ENCODE measurements at regions of chr2 and their contacts with region 1.

Region 1: DNA sequence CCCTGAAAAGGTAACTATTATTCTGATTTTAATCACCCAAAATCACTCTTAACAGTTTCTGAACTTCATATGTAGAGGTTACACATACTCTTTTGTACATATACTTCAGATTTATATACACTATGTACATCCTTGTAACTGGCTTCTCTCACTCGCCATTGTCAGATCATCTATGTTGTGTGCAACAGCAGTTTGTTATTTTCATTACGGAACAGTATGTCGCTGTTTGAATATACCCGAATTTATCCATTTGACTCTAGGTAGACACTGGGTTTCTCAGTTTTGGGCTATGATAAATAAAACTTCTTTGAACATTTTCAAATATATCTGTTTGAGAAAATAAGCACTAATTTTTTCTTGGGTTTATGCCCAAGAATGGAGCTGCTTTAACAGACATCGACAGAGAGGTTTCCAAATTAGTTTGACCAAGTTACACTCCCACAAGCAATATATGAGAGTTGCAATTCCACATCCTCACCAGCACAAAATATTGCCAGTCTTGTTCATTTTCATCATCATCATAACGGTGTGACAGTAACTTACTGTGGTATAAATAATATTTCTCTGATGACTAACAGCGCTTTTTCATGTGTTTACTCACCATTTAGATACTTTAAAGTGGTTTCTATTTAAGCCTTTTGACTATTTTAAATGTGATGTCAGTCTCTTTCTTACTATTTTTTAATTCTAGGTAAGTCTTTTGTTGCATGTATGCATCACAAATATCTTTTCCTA is 80.9 kb downstream of the SMC6 start:
- DNase-seq: peak; percentile 7 to 20
- ATAC-seq: peak; percentile 84 to 88
- H3K4me3 ChIP-seq: no peak overlapping the region
- H3K27ac ChIP-seq: no peak overlapping the region
- H3K4me1 ChIP-seq: peaks cover 3% of the 10 kb centered on the region; the same call in 1 of the 3 replicates
- CTCF ChIP-seq: no peak
- EP300 ChIP-seq: no peak
- POLR2A ChIP-seq: no peak
- RAD21 ChIP-seq: no peak

Region 2: GRCh38 chr2:16773080-16773713 is 899.6 kb before region 1 on chr2:
- CTCF ChIA-PET with region 1: interaction called, 16 read pairs
- POLR2A ChIA-PET with region 1: no interaction called
- DNase-seq: peak; percentile 31 to 63
- ATAC-seq: peak; percentile 76 to 91; a peak in 5 of 6 replicates
- H3K4me3 ChIP-seq: no peak overlapping the region
- H3K27ac ChIP-seq: no peak overlapping the region
- H3K4me1 ChIP-seq: no peaks in the 10 kb centered on the region
- CTCF ChIP-seq: peak; percentile 82
- EP300 ChIP-seq: no peak
- POLR2A ChIP-seq: no peak
- RAD21 ChIP-seq: peak; percentile 83 to 90

Region 3: GRCh38 chr2:17309741-17310339 is 362.9 kb before region 1 on chr2:
- CTCF ChIA-PET with region 1: interaction called, 12 read pairs
- POLR2A ChIA-PET with region 1: no interaction called
- DNase-seq: peak; percentile 51 to 81
- ATAC-seq: peak; percentile 88 to 97
- H3K4me3 ChIP-seq: no peak overlapping the region
- H3K27ac ChIP-seq: no peak overlapping the region
- H3K4me1 ChIP-seq: peaks cover 15% of the 10 kb centered on the region
- CTCF ChIP-seq: peak; percentile 76
- EP300 ChIP-seq: no peak
- POLR2A ChIP-seq: no peak
- RAD21 ChIP-seq: peak; percentile 63 to 70

Region 4: GRCh38 chr2:17637131-17637906 is 35.4 kb before region 1 on chr2:
- CTCF ChIA-PET with region 1: interaction called, 73 read pairs
- POLR2A ChIA-PET with region 1: interaction called, 5 read pairs
- DNase-seq: no peak
- ATAC-seq: no peak
- H3K4me3 ChIP-seq: no peak overlapping the region
- H3K27ac ChIP-seq: no peak overlapping the region
- H3K4me1 ChIP-seq: no peaks in the 10 kb centered on the region
- CTCF ChIP-seq: no peak
- EP300 ChIP-seq: no peak
- POLR2A ChIP-seq: no peak
- RAD21 ChIP-seq: no peak

Region 5: DNA sequence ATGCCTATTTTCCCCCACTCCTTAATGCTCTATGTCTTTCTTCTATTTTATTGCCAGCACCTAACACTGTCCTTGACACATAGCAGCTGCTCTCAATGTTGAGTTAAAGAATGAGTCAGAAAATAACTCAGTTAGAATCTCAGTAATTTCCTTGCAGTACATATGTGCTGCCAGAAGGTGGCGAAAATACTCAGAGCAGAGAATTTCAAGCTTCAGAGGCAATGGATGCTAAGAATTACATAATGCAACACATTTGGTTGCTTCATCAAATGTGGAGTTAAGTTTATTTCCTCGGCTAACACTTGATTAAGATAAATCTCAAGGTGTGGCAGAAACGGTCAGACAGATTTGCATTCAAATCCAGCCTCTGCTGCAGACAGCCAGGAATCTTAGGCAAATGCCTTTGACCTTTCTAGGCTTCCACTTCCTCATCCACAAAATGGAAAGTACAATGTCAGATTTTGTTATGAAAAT is 26.6 kb before region 1 on chr2:
- CTCF ChIA-PET with region 1: interaction called, 73 read pairs
- POLR2A ChIA-PET with region 1: interaction called, 4 read pairs
- DNase-seq: peak; percentile 41 to 75
- ATAC-seq: peak; percentile 38 to 72; a peak in 3 of 6 replicates
- H3K4me3 ChIP-seq: no peak overlapping the region
- H3K27ac ChIP-seq: peak overlapping the region; percentile 25 to 65; a peak in 4 of 6 replicates
- H3K4me1 ChIP-seq: peaks cover 30% of the 10 kb centered on the region
- CTCF ChIP-seq: peak; percentile 82
- EP300 ChIP-seq: no peak
- POLR2A ChIP-seq: no peak
- RAD21 ChIP-seq: peak; percentile 57 to 75

Region 6: GRCh38 chr2:17658251-17658843 is 14.4 kb before region 1 on chr2:
- CTCF ChIA-PET with region 1: interaction called, 31 read pairs
- POLR2A ChIA-PET with region 1: no interaction called
- DNase-seq: no peak
- ATAC-seq: no peak
- H3K4me3 ChIP-seq: no peak overlapping the region
- H3K27ac ChIP-seq: no peak overlapping the region
- H3K4me1 ChIP-seq: no peaks in the 10 kb centered on the region
- CTCF ChIP-seq: no peak
- EP300 ChIP-seq: no peak
- POLR2A ChIP-seq: no peak
- RAD21 ChIP-seq: no peak